GM12878 (cell line): ENCODE measurements at regions of chr5 and their contacts with region 1.

Region 1: DNA sequence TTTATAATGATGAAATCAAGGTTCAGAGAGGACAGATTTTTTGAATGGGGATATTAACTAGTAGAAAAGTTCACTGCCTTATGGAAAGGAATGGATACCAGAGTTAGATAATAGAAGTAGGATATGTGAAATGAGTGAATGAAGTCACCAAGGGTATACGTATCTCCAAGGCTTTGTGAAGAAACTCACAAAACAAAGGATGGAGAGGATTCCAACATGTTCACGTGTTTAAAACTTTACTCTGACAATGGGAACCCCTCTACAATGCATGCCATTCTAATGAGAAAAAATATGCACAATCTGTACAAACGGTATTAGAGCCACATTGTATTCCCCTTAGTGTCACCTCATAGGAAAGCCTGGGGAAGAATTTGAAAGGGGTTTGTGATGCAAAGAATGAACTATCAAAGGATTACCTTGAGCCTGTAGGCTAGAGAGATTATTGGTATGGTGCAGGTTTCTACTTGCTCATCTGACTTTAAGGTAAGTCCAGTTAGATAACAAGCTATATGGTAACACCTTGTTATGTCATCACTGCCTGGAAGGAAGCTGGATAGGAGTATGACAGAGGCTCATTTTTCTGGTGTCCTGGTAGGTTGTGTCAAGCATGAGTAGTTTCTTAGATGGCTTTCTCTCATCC is 250.2 kb upstream of the SEMA6A start:
- DNase-seq: no peak
- ATAC-seq: no peak
- H3K4me3 ChIP-seq: no peak overlapping the region
- H3K27ac ChIP-seq: no peak overlapping the region
- H3K4me1 ChIP-seq: no peaks in the 10 kb centered on the region
- H3K27me3 ChIP-seq: no peaks in the 10 kb centered on the region
- CTCF ChIP-seq: no peak
- EP300 ChIP-seq: no peak
- POLR2A ChIP-seq: no peak
- RAD21 ChIP-seq: no peak

Region 2: GRCh38 chr5:116834796-116835515 is 10.1 kb after region 1 on chr5:
- CTCF ChIA-PET with region 1: no interaction called
- POLR2A ChIA-PET with region 1: no interaction called
- RAD21 ChIA-PET with region 1: no interaction called
- SMC1A ChIA-PET with region 1: interaction called, 13 read pairs
- in situ Hi-C with region 1: no loop called
- intact Hi-C with region 1: no loop called
- DNase-seq: no peak
- ATAC-seq: no peak
- H3K4me3 ChIP-seq: no peak overlapping the region
- H3K27ac ChIP-seq: no peak overlapping the region
- H3K4me1 ChIP-seq: no peaks in the 10 kb centered on the region
- H3K27me3 ChIP-seq: no peaks in the 10 kb centered on the region
- CTCF ChIP-seq: no peak
- EP300 ChIP-seq: no peak
- POLR2A ChIP-seq: no peak
- RAD21 ChIP-seq: no peak